Natural killer cell (primary cell): ENCODE measurements at regions of chr6 and their contacts with region 1.

Region 1: DNA sequence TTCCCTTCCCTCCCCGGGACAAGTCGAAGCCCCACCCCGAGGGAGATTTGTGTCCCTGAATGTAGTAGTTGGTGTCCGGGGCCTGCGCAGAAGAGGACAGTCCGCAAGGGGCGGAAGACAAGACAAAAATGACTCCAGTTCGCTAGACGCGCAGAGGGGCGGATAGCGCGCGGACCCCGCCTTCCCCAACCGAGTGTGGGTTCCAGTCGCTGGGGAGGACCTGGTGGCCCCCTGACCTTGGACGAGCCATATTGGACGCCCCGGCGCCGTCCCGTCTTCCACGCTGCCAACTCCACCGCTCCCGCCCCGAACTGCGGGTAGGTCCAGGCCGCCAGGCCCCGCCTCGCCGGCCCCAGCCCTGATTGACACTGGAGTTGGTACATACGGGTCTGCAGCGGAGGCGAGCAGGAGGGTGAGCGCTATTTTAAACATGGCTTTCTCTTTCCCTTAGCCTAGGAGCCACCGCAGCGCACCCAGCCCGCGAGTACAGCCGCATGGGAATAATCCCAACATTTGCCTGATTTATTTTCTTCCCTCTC is 802 bp downstream of the HMGN3 start:
- DNase-seq: peak; percentile 64 to 76
- ATAC-seq: peak; percentile 61 to 77 (median 66)
- H3K4me3 ChIP-seq: peak overlapping the region; percentile 74
- H3K4me3 Mint-ChIP-seq: peak overlapping the region; percentile 94
- H3K27ac ChIP-seq: peak overlapping the region; percentile 56
- H3K27ac Mint-ChIP-seq: peak overlapping the region; percentile 88 to 95
- H3K4me1 ChIP-seq: peaks cover 3% of the 10 kb centered on the region
- H3K4me1 Mint-ChIP-seq: peaks cover 23 to 35% of the 10 kb centered on the region in 2 donors
- H3K27me3 ChIP-seq: no peaks in the 10 kb centered on the region
- H3K27me3 Mint-ChIP-seq: no peaks in the 10 kb centered on the region
- CTCF ChIP-seq: peak; percentile 23

Region 2: GRCh38 chr6:79078075-79079025 is 155.3 kb before region 1 on chr6 and contains the start of gene PHIP:
- intact Hi-C with region 1: loop called (anchors 1 kb)
- DNase-seq: peak; percentile 88 to 97
- ATAC-seq: peak; percentile 78 to 92 (median 82)
- H3K4me3 ChIP-seq: peak within 1 kb of the TSS; percentile 100
- H3K4me3 Mint-ChIP-seq: peak within 1 kb of the TSS; percentile 95
- H3K27ac ChIP-seq: peak within 1 kb of the TSS; percentile 99
- H3K27ac Mint-ChIP-seq: peak within 1 kb of the TSS; percentile 93 to 96
- H3K4me1 ChIP-seq: peaks cover 5% of the 10 kb centered on the region
- H3K4me1 Mint-ChIP-seq: peaks cover 31 to 36% of the 10 kb centered on the region in 2 donors
- H3K27me3 ChIP-seq: peaks cover 6% of the 10 kb centered on the region
- H3K27me3 Mint-ChIP-seq: peaks cover 0 to 11% of the 10 kb centered on the region in 2 donors
- CTCF ChIP-seq: no peak
- total RNA-seq, gene PHIP: 38.5 to 45.6 (median 42.5) TPM

Region 3: DNA sequence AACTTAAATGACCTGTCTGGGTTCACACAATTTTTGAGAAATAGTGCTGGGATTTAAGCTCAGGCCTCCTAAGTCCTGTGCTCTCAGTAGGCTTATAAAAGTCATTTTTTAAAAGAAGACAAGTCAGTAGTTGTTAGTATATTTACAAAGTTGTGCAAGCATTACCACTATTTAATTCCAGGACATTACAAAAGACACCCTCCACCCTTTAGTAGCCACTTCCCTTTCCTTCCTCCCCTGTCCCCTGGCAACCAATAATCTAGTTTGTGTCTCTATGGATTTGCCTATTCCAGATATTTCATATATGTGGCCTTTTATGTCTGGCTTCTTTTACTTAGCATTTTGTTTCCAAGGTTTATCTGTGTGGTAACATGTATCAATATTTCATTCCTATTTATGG is 36.8 kb before region 1 on chr6:
- intact Hi-C with region 1: no loop called
- DNase-seq: no peak
- ATAC-seq: no peak
- H3K4me3 ChIP-seq: no peak overlapping the region
- H3K4me3 Mint-ChIP-seq: no peak overlapping the region
- H3K27ac ChIP-seq: no peak overlapping the region
- H3K27ac Mint-ChIP-seq: peak overlapping the region in 1 of 2 donors; percentile 31
- H3K4me1 ChIP-seq: no peaks in the 10 kb centered on the region
- H3K4me1 Mint-ChIP-seq: peaks cover 5% of the 10 kb centered on the region in 2 donors
- H3K27me3 ChIP-seq: no peaks in the 10 kb centered on the region
- H3K27me3 Mint-ChIP-seq: no peaks in the 10 kb centered on the region
- CTCF ChIP-seq: no peak

Region 4: DNA sequence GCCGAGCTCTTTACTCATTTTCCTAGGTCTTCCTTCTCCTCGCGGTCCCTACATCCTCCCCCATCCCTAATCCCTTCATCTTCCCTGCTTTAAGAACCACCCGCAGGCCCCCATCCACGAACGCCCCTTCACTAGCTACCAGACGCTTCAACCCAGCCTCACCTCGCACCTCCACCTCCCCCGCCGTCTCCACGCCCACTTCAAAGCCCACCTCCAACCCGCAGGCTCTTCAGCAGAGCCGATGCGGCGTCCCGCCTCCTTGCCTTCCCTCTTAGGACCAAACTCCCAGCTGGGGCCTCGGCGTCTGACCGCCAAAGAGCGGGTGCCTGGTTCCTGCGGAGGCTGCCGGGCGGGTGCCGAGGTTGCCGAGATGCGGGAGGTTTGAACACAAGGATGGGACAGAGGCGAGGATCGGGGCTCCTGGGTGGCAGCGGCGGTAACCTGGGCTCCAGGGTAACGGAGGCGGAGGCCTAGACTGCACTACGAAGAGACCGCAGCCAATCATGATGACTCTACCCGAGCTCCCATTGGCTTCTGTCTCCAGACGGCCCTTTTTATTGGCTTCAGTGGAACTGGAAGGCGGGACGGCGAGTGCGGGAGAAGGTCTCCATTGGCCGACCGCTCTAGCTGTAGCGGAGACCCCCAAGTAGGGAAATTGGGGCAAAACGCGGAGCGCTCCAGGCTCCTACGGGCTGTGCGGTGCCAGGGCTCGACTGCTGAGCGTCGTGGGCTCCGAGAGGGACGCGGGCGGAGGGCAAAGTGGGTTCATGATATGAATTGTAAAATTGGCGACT is 303.5 kb after region 1 on chr6 and contains the start of gene LCA5:
- intact Hi-C with region 1: loop called (anchors 10 kb)
- DNase-seq: peak; percentile 79 to 89
- ATAC-seq: peak; percentile 95 to 96 (median 96)
- H3K4me3 ChIP-seq: peak within 1 kb of the TSS; percentile 60
- H3K4me3 Mint-ChIP-seq: no peak within 1 kb of the TSS
- H3K27ac ChIP-seq: no peak within 1 kb of the TSS
- H3K27ac Mint-ChIP-seq: no peak within 1 kb of the TSS
- H3K4me1 ChIP-seq: peaks cover 14% of the 10 kb centered on the region
- H3K4me1 Mint-ChIP-seq: no peaks in the 10 kb centered on the region
- H3K27me3 ChIP-seq: no peaks in the 10 kb centered on the region
- H3K27me3 Mint-ChIP-seq: peaks cover 7 to 20% of the 10 kb centered on the region in 2 donors
- CTCF ChIP-seq: no peak
- total RNA-seq, gene LCA5: 0.07 TPM in 1 of 3 donors, not detected in the others

Region 5: DNA sequence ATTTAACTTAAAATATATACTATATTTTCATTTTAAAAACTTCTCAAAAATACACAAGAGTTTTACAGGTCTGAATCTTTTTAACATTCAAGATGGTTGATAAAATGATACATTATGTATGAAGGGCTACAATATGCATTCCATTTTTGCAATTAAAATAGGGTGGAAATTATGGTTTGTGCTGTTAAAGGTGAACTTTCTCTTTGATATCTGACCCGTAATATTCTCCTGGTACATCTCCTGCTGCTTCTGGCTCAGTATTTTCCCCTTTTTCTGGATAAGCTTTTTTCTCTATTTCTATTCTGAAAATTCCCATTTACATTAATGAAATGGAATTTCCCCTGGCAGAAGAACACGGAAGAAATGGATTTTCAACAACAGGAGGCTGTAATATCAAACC is 331.0 kb after region 1 on chr6:
- intact Hi-C with region 1: no loop called
- DNase-seq: no peak
- ATAC-seq: no peak
- H3K4me3 ChIP-seq: no peak overlapping the region
- H3K4me3 Mint-ChIP-seq: no peak overlapping the region
- H3K27ac ChIP-seq: no peak overlapping the region
- H3K27ac Mint-ChIP-seq: no peak overlapping the region
- H3K4me1 ChIP-seq: no peaks in the 10 kb centered on the region
- H3K4me1 Mint-ChIP-seq: no peaks in the 10 kb centered on the region
- H3K27me3 ChIP-seq: no peaks in the 10 kb centered on the region
- H3K27me3 Mint-ChIP-seq: peaks cover 0 to 3% of the 10 kb centered on the region in 2 donors
- CTCF ChIP-seq: no peak

Region 6: DNA sequence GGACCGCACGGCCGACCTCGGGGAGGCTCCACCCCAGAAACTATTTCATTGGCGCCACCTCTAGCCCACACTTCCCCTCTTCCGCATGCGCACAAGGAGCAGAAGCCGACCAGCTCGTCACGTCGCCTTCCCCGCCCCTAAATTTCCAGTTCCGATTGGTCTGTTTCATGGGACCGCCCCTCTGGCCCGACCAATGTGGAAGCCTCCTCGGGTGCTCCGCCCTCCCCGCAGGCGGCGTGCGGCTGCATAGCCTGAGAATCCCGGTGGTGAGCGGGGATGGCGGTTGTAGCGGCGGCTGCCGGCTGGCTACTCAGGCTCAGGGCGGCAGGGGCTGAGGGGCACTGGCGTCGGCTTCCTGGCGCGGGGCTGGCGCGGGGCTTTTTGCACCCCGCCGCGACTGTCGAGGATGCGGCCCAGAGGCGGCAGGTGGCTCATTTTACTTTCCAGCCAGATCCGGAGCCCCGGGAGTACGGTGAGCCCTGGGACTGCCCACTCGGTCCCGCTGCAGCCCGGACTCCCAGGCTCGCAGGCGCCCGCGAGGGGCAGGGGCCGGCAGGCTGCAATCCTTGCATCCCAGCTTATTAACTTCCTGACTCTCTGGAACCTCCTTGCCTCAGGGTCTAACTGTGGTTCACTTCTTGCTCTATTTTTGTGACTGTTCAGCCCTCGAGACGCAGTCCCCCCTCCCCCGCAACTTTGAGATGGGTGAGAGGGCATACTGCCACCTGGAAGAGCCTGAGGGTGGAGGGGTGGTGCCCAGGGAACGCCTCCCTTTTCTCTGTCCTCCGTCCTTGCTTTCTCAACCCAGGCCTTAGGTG is 872.9 kb after region 1 on chr6 and contains the start of gene BCKDHB:
- intact Hi-C with region 1: loop called (anchors 10 kb)
- DNase-seq: peak; percentile 93 to 99
- ATAC-seq: peak; percentile 96 to 99 (median 97)
- H3K4me3 ChIP-seq: peak within 1 kb of the TSS; percentile 75
- H3K4me3 Mint-ChIP-seq: peak within 1 kb of the TSS; percentile 95
- H3K27ac ChIP-seq: peak within 1 kb of the TSS; percentile 63
- H3K27ac Mint-ChIP-seq: peak within 1 kb of the TSS; percentile 84 to 86
- H3K4me1 ChIP-seq: peaks cover 5% of the 10 kb centered on the region
- H3K4me1 Mint-ChIP-seq: peaks cover 16 to 21% of the 10 kb centered on the region in 2 donors
- H3K27me3 ChIP-seq: no peaks in the 10 kb centered on the region
- H3K27me3 Mint-ChIP-seq: peaks cover 18 to 21% of the 10 kb centered on the region in 2 donors
- CTCF ChIP-seq: no peak
- total RNA-seq, gene BCKDHB: 11.1 to 13.7 (median 12.8) TPM